ENCODE measurements at regions of chr5 and their contacts with region 1.

Region 1: DNA sequence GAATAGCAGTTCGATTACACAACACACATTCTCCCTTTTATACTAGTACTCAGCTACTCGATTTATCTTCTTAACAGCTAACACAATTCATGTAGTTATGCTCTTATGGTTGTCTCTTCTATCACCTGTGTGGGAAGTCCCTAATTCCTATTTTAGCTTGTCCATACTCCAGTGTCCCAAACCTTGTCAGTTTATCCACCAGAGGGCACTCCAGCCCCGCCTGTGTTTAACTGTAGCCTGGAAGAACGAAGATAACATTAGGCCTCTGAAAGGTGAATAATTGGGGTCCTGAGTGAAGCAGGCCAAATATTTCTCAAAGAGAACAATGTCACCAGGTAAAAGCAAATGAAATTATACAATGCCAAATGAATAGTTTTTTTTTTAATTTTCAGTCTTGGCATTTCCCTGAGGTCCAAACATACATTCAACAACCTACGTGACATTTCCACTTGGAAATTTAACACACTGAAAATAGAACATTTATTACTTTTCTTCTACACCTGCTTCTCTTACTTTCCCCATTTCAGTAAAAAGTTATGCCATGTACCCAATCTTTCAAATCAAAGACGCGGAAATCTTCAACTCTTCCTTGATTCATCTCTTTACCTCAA is 560.7 kb downstream of the HTR1A start:
- DNase-seq: peak; percentile 48
- H3K4me3 ChIP-seq: no peak overlapping the region
- H3K27ac ChIP-seq: no peak overlapping the region
- H3K4me1 ChIP-seq: no peaks in the 10 kb centered on the region
- CTCF ChIP-seq: peak; percentile 90

Region 2: DNA sequence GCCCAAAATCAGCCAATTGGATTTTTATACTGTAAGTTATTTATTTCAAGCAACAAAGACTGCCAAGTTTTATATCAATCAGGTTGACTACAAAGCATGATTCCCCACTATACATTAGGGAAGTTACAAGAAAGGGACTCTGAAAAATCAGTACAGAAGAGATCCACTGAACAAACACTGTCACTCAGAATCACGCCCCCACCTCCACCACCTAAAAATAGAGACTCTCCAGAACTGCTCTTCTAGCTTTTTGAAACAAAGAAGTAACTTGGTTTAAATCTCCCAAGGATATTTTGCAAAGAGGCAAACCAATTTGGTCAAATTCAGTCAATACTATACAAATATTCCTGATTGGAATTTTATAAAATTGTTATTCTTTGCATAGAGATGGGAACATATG is 122.7 kb after region 1 on chr5:
- CTCF ChIA-PET with region 1: no interaction called
- POLR2A ChIA-PET with region 1: no interaction called
- intact Hi-C with region 1: no loop called
- DNase-seq: no peak
- H3K4me3 ChIP-seq: no peak overlapping the region
- H3K27ac ChIP-seq: no peak overlapping the region
- H3K4me1 ChIP-seq: no peaks in the 10 kb centered on the region
- CTCF ChIP-seq: no peak

Region 3: DNA sequence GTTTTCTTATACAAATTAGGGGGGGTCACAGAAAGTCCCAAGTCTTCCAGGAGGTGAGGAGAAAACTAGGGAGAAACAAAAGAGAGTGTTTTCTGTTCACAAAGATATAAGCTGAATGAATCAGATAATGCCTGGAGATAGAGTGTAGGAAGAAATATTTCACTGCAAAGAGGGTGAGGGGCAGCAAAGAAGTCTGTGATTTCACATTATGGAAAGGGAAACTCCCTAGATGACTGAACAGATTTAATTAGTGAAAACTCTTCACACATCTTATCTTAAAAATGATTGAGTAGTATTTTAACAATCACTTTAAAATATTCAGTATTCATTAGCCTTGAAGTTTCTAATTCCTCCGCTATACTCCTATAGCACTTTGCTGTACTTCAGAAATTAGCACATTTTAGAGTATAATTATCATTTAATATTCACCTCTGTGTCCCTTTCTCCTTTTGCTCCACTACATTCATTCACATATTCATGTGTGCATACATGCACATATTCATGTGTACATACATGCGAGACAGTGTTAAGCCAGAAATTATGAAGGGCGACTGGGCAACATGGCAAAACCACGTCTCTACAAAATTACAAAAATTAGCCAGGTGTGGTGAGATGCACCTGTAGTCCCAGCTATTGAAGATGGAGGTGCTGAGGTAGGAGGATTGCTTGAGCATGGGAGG is 228.6 kb after region 1 on chr5:
- CTCF ChIA-PET with region 1: no interaction called
- POLR2A ChIA-PET with region 1: no interaction called
- intact Hi-C with region 1: no loop called
- DNase-seq: no peak
- H3K4me3 ChIP-seq: no peak overlapping the region
- H3K27ac ChIP-seq: no peak overlapping the region
- H3K4me1 ChIP-seq: no peaks in the 10 kb centered on the region
- CTCF ChIP-seq: no peak

Region 4: GRCh38 chr5:63963080-63963735 is 561.7 kb after region 1 on chr5:
- CTCF ChIA-PET with region 1: no interaction called
- POLR2A ChIA-PET with region 1: no interaction called
- intact Hi-C with region 1: loop called (anchors 5 kb)
- DNase-seq: peak; percentile 57
- H3K4me3 ChIP-seq: no peak overlapping the region
- H3K27ac ChIP-seq: no peak overlapping the region
- H3K4me1 ChIP-seq: no peaks in the 10 kb centered on the region
- CTCF ChIP-seq: peak; percentile 89